Natural killer cell (primary cell): ENCODE measurements at regions of chr4 and their contacts with region 1.

Region 1: DNA sequence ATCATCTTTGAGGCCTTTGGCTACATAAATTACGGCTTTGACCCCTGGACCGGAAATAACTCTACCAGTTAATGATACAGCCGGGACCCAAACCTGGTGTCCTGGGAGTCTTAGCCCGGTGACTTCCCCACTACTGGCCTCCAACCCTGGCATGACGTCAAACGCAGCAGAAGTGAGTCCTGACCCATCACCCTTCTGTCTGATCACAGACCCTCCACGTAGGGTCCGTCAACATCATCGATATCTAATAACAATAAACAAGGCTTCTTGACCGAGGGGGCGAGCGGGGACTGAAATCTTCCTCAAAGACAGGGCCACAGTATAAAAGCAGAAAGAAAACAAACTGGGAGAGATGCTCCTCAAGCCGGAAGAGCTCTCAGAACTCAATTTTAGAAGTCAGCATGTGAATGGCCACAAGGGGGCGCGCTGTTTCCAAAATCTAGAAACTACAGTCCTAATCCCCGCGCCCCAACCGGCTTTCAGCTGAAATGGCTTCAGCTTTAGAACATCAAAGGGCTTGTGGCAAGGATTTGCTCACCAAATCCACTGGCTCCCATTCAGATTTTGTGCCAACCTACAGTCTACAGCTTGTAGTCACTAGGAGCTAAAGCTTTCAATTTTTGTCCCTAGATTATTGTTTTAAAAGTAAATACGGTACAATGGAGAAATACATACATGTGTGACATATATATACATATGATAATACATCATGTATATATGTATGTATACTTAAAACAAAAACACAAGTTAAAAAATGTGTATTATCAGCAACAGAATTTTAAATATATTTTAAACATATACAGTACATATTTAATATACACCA is 46.4 kb upstream of the ENPP6 start:
- DNase-seq: peak; percentile 91 to 96
- ATAC-seq: peak; percentile 73 to 89 (median 77)
- H3K4me3 ChIP-seq: no peak overlapping the region
- H3K4me3 Mint-ChIP-seq: no peak overlapping the region
- H3K27ac ChIP-seq: no peak overlapping the region
- H3K27ac Mint-ChIP-seq: peak overlapping the region; percentile 22 to 78
- H3K4me1 ChIP-seq: peaks cover 15% of the 10 kb centered on the region
- H3K4me1 Mint-ChIP-seq: peaks cover 9 to 23% of the 10 kb centered on the region in 2 donors
- H3K27me3 ChIP-seq: no peaks in the 10 kb centered on the region
- H3K27me3 Mint-ChIP-seq: no peaks in the 10 kb centered on the region
- CTCF ChIP-seq: peak; percentile 76

Region 2: GRCh38 chr4:184343502-184344177 is 79.5 kb after region 1 on chr4:
- intact Hi-C with region 1: loop called (anchors 10 kb)
- DNase-seq: peak in 1 of 2 donors; percentile 61
- ATAC-seq: peak; percentile 50 to 65 (median 59)
- H3K4me3 ChIP-seq: peak overlapping the region; percentile 43
- H3K4me3 Mint-ChIP-seq: peak overlapping the region; percentile 89
- H3K27ac ChIP-seq: no peak overlapping the region
- H3K27ac Mint-ChIP-seq: peak overlapping the region; percentile 82 to 85
- H3K4me1 ChIP-seq: peaks cover 41% of the 10 kb centered on the region
- H3K4me1 Mint-ChIP-seq: peaks cover 52% of the 10 kb centered on the region in 2 donors
- H3K27me3 ChIP-seq: no peaks in the 10 kb centered on the region
- H3K27me3 Mint-ChIP-seq: no peaks in the 10 kb centered on the region
- CTCF ChIP-seq: no peak

Region 3: DNA sequence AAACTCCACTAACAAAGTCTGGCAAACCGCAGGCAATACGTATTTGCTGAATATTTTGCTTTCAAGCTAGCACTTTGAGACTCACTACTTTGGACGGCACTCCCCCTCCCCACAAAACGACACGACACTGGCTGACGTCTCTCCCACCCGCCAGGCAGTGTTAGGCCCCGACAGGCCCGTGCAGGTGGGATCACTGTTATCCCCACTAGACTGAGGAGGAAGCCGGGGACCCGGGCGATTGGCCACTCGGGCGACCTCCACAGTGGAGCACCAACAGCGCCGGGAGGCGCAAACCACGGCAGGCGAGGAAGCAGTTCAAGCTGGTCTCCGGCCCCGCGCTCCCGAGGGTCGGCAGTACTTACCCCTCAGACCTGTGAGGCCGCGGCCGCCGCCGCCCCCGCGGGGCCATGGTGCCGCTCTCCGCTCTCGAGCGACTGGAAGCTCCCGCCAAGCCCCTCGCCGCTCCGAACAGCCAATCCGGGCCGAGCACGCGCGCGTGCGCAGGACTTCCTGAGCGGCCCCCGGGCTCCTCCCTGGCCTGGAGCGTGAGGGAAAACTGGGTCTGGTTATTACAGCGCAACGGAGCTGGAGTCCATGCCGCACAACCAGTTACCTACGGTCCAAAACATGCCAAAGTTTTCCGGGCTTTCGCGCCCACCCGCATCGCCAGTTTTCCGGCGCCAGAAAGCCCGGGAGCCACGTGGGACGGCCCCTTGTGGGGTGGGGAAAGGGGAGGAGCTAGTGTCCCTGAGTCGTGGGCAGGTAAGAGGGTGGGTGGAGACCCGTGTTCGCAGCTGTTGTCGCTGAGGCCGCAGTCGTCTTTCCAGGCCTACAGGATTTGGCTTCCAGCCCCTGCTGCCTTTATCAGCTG is 469.8 kb after region 1 on chr4 and contains the start of gene CENPU:
- intact Hi-C with region 1: loop called (anchors 10 kb)
- DNase-seq: peak; percentile 95 to 97
- ATAC-seq: peak; percentile 95 to 98 (median 95)
- H3K4me3 ChIP-seq: peak within 1 kb of the TSS; percentile 69
- H3K4me3 Mint-ChIP-seq: peak within 1 kb of the TSS; percentile 91
- H3K27ac ChIP-seq: peak within 1 kb of the TSS; percentile 41
- H3K27ac Mint-ChIP-seq: peak within 1 kb of the TSS; percentile 73 to 90
- H3K4me1 ChIP-seq: peaks cover 9% of the 10 kb centered on the region
- H3K4me1 Mint-ChIP-seq: peaks cover 11 to 16% of the 10 kb centered on the region in 2 donors
- H3K27me3 ChIP-seq: no peaks in the 10 kb centered on the region
- H3K27me3 Mint-ChIP-seq: no peaks in the 10 kb centered on the region
- CTCF ChIP-seq: no peak
- total RNA-seq, gene CENPU: 6.5 to 12.1 (median 10.3) TPM